ENCODE measurements at regions of chr3 and their contacts with region 1.

Region 1: GRCh38 chr3:4866841-4867240 is 112.4 kb upstream of the BHLHE40 start:
- DNase-seq: no peak
- ATAC-seq: peak in 1 of 4 donors; percentile 4
- H3K4me3 ChIP-seq: peak overlapping the region in 9 of 12 donors; percentile 6 to 63 (median 57)
- H3K27ac ChIP-seq: peak overlapping the region; percentile 88 to 99 (median 98)
- H3K4me1 ChIP-seq: peaks cover 8 to 31% (median 21%) of the 10 kb centered on the region in 12 donors
- H3K27me3 ChIP-seq: no peaks in the 10 kb centered on the region
- CTCF ChIP-seq: no peak
- POLR2A ChIP-seq: no peak

Region 2: DNA sequence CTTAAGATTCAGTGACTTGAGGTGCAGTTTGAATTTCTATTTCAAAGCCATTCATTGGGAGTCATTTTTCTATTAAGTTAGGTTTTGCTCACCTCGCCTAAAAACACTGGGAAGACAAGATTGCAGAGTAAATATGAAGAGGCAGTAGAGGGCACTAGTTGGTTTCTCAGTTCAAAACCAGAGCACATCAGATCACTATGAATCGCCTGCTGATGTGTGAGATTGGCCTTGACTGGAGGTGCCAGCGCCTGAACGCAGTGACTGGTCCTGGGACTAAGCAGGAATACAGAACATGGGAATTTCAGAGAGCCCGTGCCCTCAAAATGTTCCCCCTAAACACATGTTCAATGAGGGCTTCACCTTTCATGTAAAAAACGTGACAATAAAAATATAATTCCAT is 144.7 kb before region 1 on chr3:
- intact Hi-C with region 1: loop called in 2 of 10 experiments (anchors 5 to 10 kb)
- DNase-seq: peak in 2 of 5 donors; percentile 56 to 60
- ATAC-seq: peak; percentile 59 to 83 (median 74)
- H3K4me3 ChIP-seq: no peak overlapping the region
- H3K27ac ChIP-seq: peak overlapping the region in 9 of 12 donors; percentile 12 to 73 (median 58)
- H3K4me1 ChIP-seq: peaks cover 0 to 66% (median 41%) of the 10 kb centered on the region in 12 donors
- H3K27me3 ChIP-seq: no peaks in the 10 kb centered on the region
- CTCF ChIP-seq: peak in 10 of 12 donors; percentile 37 to 62 (median 48)
- POLR2A ChIP-seq: no peak

Region 3: DNA sequence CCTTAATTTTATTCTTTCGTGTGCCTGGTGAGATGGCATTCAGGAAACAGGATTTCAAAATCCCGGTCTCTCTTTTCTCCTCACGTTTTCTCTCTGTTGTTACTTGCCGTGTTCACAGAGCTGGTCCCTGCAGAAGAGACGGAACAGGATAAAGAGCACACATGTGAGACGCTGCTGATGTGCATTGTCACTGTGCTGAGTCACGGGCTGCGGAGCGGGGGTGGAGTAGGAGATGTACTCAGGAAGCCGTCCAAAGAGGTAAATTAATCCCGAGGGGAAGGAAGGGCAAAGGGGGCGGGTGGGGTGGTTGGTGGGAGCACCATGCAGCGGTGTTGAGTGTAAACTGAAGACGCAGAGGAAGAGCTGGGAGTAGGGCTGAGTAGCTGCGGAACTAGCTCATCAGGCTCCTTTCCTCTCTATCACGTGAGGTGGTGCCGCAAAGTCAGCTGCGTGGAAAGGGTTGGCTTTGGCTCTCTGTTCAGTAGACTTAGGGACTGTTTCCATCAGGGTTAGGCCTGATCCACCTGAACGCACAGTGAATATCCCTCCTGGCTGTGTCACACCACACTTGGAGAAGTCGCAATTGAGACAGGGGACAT is 52.4 kb before region 1 on chr3:
- intact Hi-C with region 1: no loop called
- DNase-seq: peak; percentile 31 to 72 (median 64)
- ATAC-seq: peak; percentile 51 to 90 (median 76)
- H3K4me3 ChIP-seq: peak overlapping the region in 1 of 12 donors; percentile 22
- H3K27ac ChIP-seq: peak overlapping the region in 8 of 12 donors; percentile 5 to 69 (median 41)
- H3K4me1 ChIP-seq: peaks cover 0 to 12% (median 0%) of the 10 kb centered on the region in 12 donors
- H3K27me3 ChIP-seq: no peaks in the 10 kb centered on the region
- CTCF ChIP-seq: no peak
- POLR2A ChIP-seq: no peak

Region 4: DNA sequence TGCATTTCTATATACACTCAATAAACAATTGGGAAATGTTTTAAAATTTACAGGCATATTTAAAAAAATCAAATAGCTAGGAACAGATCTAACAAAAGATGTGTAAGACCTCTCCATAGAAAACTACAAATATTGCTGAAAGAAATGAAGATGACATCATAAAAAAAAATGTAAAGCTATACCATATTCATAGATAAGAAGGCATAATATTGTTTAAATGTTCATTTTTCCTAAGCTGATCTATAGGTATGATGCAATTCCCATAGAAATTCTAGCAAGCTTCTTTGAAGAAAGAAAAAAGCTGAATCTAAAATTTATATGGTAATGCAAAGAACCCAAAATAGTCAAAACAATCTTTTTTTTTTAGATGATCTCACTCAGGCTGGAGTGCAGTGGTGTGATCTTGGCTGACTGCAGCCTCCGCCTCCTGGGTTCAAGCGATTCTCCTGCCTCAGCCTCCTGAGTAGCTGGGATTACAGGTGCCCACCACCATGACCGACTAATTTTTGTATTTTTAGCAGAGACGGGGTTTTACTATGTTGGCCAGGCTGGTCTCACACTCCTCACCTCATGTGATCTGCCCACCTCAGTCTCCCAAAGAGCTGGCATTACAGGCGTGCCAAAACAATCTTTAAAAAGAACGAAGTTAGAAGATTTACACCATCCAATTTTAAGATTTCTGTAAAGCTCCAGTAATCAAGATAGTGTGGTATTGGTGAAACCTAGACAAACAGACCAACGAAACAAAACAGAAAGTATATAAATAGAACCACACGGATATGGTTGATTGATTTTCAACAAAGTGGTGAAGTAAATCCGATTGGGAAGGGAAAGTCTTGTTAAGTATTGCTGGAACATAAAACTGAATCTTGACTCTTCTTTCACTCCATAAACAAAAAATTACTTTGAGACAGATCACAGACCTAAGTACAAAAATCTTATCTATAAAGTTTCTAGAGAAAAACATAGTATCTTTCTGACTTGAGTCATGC is 106.1 kb after region 1 on chr3:
- intact Hi-C with region 1: loop called in 1 of 10 experiments (anchors 5 kb)
- DNase-seq: no peak
- ATAC-seq: no peak
- H3K4me3 ChIP-seq: no peak overlapping the region
- H3K27ac ChIP-seq: no peak overlapping the region
- H3K4me1 ChIP-seq: peaks cover 0 to 22% (median 14%) of the 10 kb centered on the region in 12 donors
- H3K27me3 ChIP-seq: no peaks in the 10 kb centered on the region
- CTCF ChIP-seq: no peak
- POLR2A ChIP-seq: no peak

Region 5: DNA sequence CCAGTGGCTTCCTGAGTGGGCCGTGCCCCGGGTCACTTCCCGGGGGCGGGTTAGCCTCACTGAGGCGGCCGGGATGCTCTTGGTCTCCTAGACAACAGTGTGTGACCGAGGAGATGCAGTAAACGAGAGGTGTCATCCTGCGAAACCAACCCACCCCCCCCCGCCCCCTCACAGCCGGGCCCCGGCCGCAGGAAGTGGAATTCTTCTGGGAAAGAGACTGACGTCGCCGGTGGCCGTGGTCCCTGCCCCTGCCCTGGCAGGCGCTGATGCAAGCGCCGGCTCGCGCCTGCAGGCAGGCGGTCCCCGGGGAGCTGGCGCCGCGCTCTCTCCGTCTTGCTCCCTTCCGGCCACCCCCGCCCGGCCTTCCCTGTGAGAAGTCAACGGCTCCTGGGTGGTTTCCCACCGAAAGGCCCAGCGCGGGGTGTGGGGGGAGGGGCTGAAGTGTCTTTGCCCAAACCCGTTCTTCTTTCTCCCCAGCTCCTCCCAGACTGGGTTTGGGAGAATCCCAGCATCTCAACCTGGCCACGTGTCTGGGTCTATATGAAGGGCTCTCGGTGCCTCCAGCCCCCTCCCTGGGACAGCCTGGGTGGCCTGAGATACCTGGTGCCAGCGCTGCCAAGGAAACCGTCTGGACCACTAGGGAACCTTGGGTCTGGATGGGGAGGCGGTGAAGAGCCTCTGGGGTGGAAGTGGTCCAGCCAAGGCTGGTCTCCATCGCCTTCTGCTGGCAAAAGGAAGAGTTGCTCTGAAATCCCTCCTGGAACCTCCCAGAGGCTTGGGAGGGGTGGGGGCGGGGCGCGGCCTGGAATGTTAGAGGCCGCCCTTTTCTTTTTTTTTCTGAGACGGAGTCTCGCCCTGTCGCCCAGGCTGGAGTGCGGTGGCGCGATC is 159.7 kb after region 1 on chr3:
- intact Hi-C with region 1: loop called in 1 of 10 experiments (anchors 2 kb)
- DNase-seq: peak; percentile 92 to 96 (median 93)
- ATAC-seq: peak; percentile 90 to 96 (median 92)
- H3K4me3 ChIP-seq: peak overlapping the region; percentile 13 to 65 (median 56)
- H3K27ac ChIP-seq: peak overlapping the region; percentile 58 to 95 (median 81)
- H3K4me1 ChIP-seq: peaks cover 0 to 23% (median 8%) of the 10 kb centered on the region in 12 donors
- H3K27me3 ChIP-seq: no peaks in the 10 kb centered on the region
- CTCF ChIP-seq: peak; percentile 54 to 87 (median 66)
- POLR2A ChIP-seq: no peak